GM13977 (cell line): ENCODE measurements at regions of chr6 and their contacts with region 1.

Region 1: GRCh38 chr6:47733879-47734558 is 35.6 kb downstream of the ADGRF4 start:
- DNase-seq: peak; percentile 36
- CTCF ChIP-seq: peak; percentile 67

Region 2: DNA sequence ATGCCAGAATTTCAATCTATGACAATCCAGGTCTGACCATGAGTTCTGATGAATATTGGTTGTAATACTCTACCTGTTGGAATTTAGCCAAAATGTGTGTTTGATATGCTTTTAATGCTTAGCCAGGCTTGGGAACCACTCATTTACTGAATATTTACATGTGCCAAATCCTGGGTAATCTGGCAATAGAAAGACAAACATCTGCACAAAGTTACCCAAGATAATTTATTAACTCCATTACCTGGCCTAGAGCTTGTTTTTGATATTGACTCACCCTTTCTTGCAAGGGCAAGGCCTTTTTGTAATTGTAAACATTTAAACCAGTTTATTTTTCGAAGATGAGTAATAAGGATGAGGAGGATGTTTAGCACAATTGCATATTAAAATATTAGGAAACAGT is 270.0 kb before region 1 on chr6:
- in situ Hi-C with region 1: no loop called
- DNase-seq: no peak
- CTCF ChIP-seq: no peak

Region 3: DNA sequence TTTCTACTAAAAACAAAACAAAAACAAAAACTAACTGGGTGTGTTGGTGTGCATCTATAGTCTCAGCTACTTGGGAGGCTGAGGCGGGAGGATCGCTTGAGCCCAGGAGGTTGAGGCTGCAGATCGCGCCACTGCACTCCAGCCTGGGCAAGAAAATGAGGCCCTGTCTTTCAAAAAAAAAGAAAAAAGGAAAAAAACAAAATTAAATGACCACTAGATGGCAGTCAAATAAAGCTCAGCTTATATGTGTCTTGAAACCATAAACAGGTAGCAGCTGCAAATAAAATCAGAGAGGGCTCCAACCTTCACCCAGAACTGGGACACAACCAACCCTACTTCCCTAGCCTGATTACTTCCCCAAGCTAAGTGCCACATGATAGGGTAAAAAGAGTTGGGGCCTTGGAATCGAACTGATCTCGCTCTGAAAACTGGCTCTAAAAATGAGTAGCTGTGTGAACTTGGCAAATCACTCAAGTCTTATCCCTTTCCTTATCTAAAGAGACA is 102.7 kb before region 1 on chr6:
- in situ Hi-C with region 1: loop called (anchors 25 kb)
- DNase-seq: peak; percentile 38
- CTCF ChIP-seq: peak; percentile 45

Region 4: DNA sequence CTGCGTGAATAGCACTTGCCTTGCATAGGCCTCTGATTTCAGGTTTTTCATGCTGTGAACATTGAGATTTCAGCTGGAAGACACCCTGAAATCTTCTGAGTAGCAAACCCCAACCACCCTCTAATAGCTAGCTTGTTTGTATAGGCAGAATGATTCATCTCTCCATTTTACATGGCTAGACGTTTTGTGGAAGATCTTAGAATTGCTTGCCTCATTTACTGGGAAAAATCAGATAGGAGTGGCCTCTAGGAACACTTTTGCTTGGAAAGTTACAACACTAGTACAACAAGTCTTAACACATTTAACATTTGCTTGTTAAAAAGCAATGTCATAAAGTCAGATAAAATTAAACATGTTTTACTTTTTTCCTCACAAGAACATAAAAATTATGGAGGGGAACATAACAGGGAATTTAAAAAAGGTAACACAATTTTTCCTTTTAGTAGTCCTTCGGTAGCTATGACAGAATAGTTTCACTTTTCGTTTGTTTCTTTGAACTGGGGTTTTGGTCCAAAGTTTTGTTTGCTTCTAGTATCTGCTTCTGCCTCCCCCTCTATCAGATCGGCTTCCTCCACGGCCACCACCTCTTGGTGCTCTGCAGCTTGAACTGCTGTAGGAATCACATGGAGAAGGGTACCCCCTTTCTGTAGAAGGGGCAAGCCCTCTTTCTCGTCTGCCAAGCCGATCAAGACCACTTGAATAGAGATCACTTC is 479.2 kb after region 1 on chr6:
- in situ Hi-C with region 1: no loop called
- DNase-seq: no peak
- CTCF ChIP-seq: no peak